AG04449 (cell line): ENCODE measurements at regions of chr10 and their contacts with region 1.

Region 1: DNA sequence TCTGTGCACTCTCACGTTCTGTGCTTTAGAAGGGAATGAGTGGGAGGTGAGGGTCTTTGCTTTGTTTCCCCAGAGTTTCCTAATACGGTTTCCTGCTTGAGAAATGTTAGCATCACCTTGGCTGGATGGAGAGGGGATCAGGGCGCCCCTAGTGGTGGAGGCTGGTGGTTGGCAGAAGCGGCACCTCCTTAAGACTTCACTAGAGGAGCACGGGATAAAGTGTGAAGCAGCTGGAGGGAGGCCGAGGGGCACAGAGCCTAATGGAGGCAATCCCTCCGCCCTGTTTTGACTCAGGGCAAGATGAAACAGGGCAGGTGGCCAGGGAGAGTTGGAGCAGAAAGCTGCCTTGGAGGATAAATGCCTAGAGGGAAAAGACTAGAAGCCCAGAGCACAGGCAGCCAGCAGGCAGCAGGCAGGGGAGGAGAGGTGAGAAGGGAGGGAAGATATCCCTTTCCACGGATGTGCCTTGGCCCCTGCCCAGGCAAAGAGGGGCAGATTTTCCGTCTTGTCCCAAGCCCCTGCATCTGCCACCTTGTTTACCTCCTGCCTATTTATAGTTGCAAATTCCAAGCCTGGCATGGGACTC is 56.0 kb upstream of the BTRC start:
- DNase-seq: no peak
- H3K4me3 ChIP-seq: no peak overlapping the region
- CTCF ChIP-seq: peak; percentile 86

Region 2: DNA sequence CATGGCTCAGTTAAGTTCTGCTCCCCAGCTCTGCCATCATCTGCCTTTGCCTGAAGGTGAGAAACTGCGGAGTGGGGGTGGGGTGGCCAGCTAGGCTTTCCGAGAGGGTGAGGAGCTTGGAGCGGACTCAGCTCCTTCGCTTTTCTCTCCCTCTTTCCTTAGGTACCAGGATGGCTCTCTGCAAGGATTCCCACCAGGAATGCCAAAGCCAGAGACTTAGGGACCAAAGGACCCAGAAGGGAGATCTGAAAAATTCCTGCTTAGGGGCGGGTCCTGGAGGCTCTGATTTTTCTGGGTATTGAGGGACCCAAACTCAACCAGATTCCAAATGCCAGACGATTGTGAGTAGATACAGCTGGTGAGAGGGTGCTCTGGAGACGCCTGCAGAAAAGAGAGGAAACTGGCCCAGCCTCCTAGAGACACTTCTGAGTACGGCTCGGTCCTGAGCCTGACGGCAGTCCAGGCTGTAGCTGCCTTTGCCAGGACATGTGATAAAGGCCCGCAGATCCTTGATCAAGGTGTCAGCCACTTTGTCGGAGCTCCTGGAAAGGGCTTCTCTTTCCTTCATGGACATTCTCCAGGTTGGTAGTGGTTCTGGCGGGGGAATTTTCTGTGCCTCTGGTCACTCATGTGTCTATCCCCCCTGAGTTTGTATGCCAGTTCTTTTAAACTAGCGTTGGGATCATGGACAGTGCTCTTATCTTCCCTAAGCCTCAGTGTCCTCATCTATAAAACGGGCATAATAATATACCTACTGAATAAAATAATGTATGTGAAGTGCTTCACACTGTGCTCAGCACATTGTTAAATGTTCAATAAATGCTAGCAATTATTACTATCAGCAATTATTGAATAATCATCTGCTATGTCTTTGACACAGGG is 13.4 kb after region 1 on chr10:
- CTCF ChIA-PET with region 1: interaction called, 68 read pairs
- POLR2A ChIA-PET with region 1: no interaction called
- DNase-seq: no peak
- H3K4me3 ChIP-seq: no peak overlapping the region
- CTCF ChIP-seq: no peak